ENCODE measurements at regions of chr11 and their contacts with region 1.

Region 1: DNA sequence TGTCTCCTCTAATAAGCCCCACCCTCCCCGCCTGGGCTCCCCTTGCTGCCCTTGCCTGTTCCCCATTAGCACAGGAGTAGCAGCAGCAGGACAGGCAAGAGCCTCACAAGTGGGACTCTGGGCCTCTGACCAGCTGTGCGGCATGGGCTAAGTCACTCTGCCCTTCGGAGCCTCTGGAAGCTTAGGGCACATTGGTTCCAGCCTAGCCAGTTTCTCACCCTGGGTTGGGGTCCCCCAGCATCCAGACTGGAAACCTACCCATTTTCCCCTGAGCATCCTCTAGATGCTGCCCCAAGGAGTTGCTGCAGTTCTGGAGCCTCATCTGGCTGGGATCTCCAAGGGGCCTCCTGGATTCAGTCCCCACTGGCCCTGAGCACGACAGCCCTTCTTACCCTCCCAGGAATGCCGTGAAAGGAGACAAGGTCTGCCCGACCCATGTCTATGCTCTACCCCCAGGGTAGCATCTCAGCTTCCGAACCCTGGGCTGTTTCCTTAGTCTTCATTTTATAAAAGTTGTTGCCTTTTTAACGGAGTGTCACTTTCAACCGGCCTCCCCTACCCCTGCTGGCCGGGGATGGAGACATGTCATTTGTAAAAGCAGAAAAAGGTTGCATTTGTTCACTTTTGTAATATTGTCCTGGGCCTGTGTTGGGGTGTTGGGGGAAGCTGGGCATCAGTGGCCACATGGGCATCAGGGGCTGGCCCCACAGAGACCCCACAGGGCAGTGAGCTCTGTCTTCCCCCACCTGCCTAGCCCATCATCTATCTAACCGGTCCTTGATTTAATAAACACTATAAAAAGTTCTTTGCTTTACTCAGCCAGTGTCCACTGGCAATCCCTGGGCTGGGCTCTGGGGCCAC is 14.4 kb downstream of the TSKU start:
- DNase-seq: no peak
- H3K4me3 ChIP-seq: no peak overlapping the region
- H3K27ac ChIP-seq: no peak overlapping the region
- H3K4me1 ChIP-seq: peaks cover 25 to 55% of the 10 kb centered on the region in 2 donors
- H3K27me3 ChIP-seq: no peaks in the 10 kb centered on the region
- CTCF ChIP-seq: no peak
- POLR2A ChIP-seq: no peak

Region 2: DNA sequence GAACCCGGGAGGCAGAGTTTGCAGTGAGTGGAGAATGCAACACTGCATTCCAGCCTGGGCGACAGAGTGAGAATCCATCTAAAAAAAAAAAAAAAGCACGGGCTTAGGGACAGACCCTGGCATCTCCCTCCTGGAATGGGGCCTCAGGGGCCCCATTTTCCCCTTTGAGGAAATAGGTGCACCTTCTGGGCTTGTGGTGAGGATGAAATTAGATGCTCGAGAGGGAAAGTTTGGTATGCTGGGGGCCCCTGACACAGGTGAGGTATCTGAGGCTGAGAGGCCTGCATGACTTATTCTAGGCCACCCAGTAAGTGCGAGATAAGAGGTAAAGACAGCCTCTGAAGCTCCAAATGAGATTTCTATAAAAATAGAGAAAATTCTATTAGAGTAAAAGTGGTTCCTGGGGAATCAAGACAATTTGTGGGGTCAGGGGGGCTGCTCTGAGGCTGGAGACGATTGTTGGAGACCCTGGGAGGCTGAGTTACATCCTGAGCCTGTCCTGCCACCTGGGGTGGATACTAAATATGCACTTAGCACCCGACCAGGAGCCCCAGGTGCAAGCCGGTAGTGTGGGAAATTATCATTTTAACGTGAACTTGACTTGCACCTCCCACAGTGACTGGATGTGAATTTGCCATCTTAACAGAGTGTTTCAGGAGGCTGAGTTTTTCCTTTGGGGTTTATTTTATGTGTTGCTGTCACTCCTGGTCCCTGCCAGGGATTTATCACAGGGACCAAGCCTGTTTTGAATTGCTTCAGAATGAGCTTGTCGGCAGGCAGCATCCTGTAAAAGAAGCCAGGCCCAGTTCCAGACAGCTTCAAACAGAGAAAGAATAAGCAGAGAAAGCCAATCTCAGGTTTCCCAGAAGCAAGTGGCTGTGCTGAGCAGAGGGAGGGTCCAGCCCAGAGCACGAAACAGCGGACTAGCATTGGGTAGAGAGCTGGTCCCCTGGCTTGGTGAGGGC is 62.8 kb before region 1 on chr11:
- intact Hi-C with region 1: loop called (anchors 2 kb)
- DNase-seq: no peak
- H3K4me3 ChIP-seq: no peak overlapping the region
- H3K27ac ChIP-seq: no peak overlapping the region
- H3K4me1 ChIP-seq: peaks cover 0 to 6% of the 10 kb centered on the region in 2 donors
- H3K27me3 ChIP-seq: no peaks in the 10 kb centered on the region
- CTCF ChIP-seq: no peak
- POLR2A ChIP-seq: no peak

Measured in thyroid gland (tissue), 4 donors.